ENCODE measurements at regions of chr3 and their contacts with region 1.

Region 1: GRCh38 chr3:132416807-132417694 is at the start of gene DNAJC13:
- DNase-seq: peak; percentile 80 to 93 (median 92)
- ATAC-seq: peak; percentile 97
- H3K4me3 ChIP-seq: peak within 1 kb of the TSS; percentile 94
- H3K4me3 Mint-ChIP-seq: peak within 1 kb of the TSS; percentile 97 to 100 (median 99)
- H3K27ac ChIP-seq: peak within 1 kb of the TSS; percentile 82
- H3K27ac Mint-ChIP-seq: peak within 1 kb of the TSS; percentile 93 to 99 (median 98)
- H3K4me1 ChIP-seq: peaks cover 7 to 11% of the 10 kb centered on the region in 2 donors
- H3K4me1 Mint-ChIP-seq: peaks cover 12 to 40% (median 33%) of the 10 kb centered on the region in 7 donors
- H3K27me3 ChIP-seq: no peaks in the 10 kb centered on the region
- H3K27me3 Mint-ChIP-seq: peaks cover 0 to 4% (median 0%) of the 10 kb centered on the region in 5 donors
- total RNA-seq, gene DNAJC13: 23.6 to 41.5 (median 37.5) TPM

Region 2: GRCh38 chr3:130746246-130747039 is 1670.6 kb before region 1 on chr3 and contains the start of gene PIK3R4:
- CTCF ChIA-PET with region 1: no interaction called
- POLR2A ChIA-PET with region 1: no interaction called
- intact Hi-C with region 1: loop called in 1 of 2 experiments (anchors 2 kb)
- DNase-seq: peak; percentile 79 to 98 (median 92)
- ATAC-seq: peak; percentile 87
- H3K4me3 ChIP-seq: peak within 1 kb of the TSS; percentile 87
- H3K4me3 Mint-ChIP-seq: peak within 1 kb of the TSS in 9 of 10 donors; percentile 82 to 97 (median 93)
- H3K27ac ChIP-seq: peak within 1 kb of the TSS; percentile 89
- H3K27ac Mint-ChIP-seq: peak within 1 kb of the TSS; percentile 89 to 99 (median 94)
- H3K4me1 ChIP-seq: peaks cover 5 to 20% of the 10 kb centered on the region in 2 donors
- H3K4me1 Mint-ChIP-seq: peaks cover 35 to 62% (median 50%) of the 10 kb centered on the region in 7 donors
- H3K27me3 ChIP-seq: no peaks in the 10 kb centered on the region
- H3K27me3 Mint-ChIP-seq: peaks cover 0 to 3% (median 0%) of the 10 kb centered on the region in 5 donors
- total RNA-seq, gene PIK3R4: 15.5 to 33.6 (median 27.3) TPM

Region 3: GRCh38 chr3:131502530-131503245 is 914.4 kb before region 1 on chr3 and contains the start of gene MRPL3:
- CTCF ChIA-PET with region 1: no interaction called
- POLR2A ChIA-PET with region 1: no interaction called
- intact Hi-C with region 1: loop called (anchors 2 to 10 kb)
- DNase-seq: peak; percentile 68 to 82 (median 78)
- ATAC-seq: peak; percentile 90
- H3K4me3 ChIP-seq: peak within 1 kb of the TSS; percentile 79
- H3K4me3 Mint-ChIP-seq: peak within 1 kb of the TSS; percentile 94 to 100 (median 98)
- H3K27ac ChIP-seq: peak within 1 kb of the TSS; percentile 72
- H3K27ac Mint-ChIP-seq: peak within 1 kb of the TSS; percentile 86 to 98 (median 96)
- H3K4me1 ChIP-seq: peaks cover 23% of the 10 kb centered on the region in 2 donors
- H3K4me1 Mint-ChIP-seq: peaks cover 15 to 65% (median 53%) of the 10 kb centered on the region in 7 donors
- H3K27me3 ChIP-seq: no peaks in the 10 kb centered on the region
- H3K27me3 Mint-ChIP-seq: no peaks in the 10 kb centered on the region
- total RNA-seq, gene MRPL3: 33.8 to 79.2 (median 52.7) TPM

Region 4: DNA sequence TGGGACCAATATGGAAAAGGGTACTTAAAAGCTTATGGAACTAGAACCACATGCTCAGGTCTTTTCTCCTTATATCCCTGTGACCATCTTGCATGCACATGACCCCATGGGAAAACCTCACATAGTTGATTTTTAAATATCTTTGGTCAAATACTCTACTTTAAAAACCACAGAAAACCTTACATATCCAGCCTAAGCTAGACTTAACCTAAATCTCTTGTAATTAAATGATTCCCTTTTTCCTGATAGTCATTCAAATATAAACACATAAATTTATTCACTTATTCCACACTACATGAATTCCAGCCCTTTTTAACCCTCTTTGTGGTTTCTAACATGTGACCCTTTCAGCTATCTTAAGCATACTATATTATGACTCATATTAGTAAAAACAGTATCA is 47.0 kb after region 1 on chr3:
- CTCF ChIA-PET with region 1: no interaction called
- POLR2A ChIA-PET with region 1: no interaction called
- intact Hi-C with region 1: no loop called
- DNase-seq: no peak
- ATAC-seq: no peak
- H3K4me3 ChIP-seq: no peak overlapping the region
- H3K4me3 Mint-ChIP-seq: no peak overlapping the region
- H3K27ac ChIP-seq: no peak overlapping the region
- H3K27ac Mint-ChIP-seq: peak overlapping the region in 1 of 9 donors; percentile 33
- H3K4me1 ChIP-seq: no peaks in the 10 kb centered on the region
- H3K4me1 Mint-ChIP-seq: no peaks in the 10 kb centered on the region
- H3K27me3 ChIP-seq: no peaks in the 10 kb centered on the region
- H3K27me3 Mint-ChIP-seq: no peaks in the 10 kb centered on the region

Region 5: GRCh38 chr3:132659365-132660051 is 242.5 kb after region 1 on chr3 and contains the start of gene ACAD11:
- CTCF ChIA-PET with region 1: no interaction called
- POLR2A ChIA-PET with region 1: interaction called, 3 read pairs
- intact Hi-C with region 1: loop called (anchors 1 to 2 kb)
- DNase-seq: peak in 7 of 9 donors; percentile 2 to 55 (median 18)
- ATAC-seq: peak; percentile 54
- H3K4me3 ChIP-seq: peak within 1 kb of the TSS; percentile 99
- H3K4me3 Mint-ChIP-seq: peak within 1 kb of the TSS; percentile 84 to 98 (median 97)
- H3K27ac ChIP-seq: peak within 1 kb of the TSS; percentile 92
- H3K27ac Mint-ChIP-seq: peak within 1 kb of the TSS; percentile 95 to 98 (median 96)
- H3K4me1 ChIP-seq: peaks cover 9 to 19% of the 10 kb centered on the region in 2 donors
- H3K4me1 Mint-ChIP-seq: peaks cover 42 to 78% (median 67%) of the 10 kb centered on the region in 7 donors
- H3K27me3 ChIP-seq: no peaks in the 10 kb centered on the region
- H3K27me3 Mint-ChIP-seq: no peaks in the 10 kb centered on the region
- total RNA-seq, gene ACAD11: 15.0 to 33.7 (median 27.5) TPM

Region 6: GRCh38 chr3:133805527-133806475 is 1388.8 kb after region 1 on chr3 and contains the start of gene SRPRB:
- CTCF ChIA-PET with region 1: no interaction called
- POLR2A ChIA-PET with region 1: no interaction called
- intact Hi-C with region 1: loop called (anchors 1 to 5 kb)
- DNase-seq: peak; percentile 91 to 96 (median 94)
- ATAC-seq: peak; percentile 98
- H3K4me3 ChIP-seq: peak within 1 kb of the TSS; percentile 76
- H3K4me3 Mint-ChIP-seq: peak within 1 kb of the TSS; percentile 90 to 99 (median 98)
- H3K27ac ChIP-seq: peak within 1 kb of the TSS; percentile 81
- H3K27ac Mint-ChIP-seq: peak within 1 kb of the TSS; percentile 70 to 98 (median 95)
- H3K4me1 ChIP-seq: peaks cover 7 to 8% of the 10 kb centered on the region in 2 donors
- H3K4me1 Mint-ChIP-seq: peaks cover 16 to 50% (median 34%) of the 10 kb centered on the region in 7 donors
- H3K27me3 ChIP-seq: no peaks in the 10 kb centered on the region
- H3K27me3 Mint-ChIP-seq: peaks cover 0 to 7% (median 5%) of the 10 kb centered on the region in 5 donors
- total RNA-seq, gene SRPRB: 27.4 to 63.3 (median 34.6) TPM

Measured in naive thymus-derived CD4-positive, alpha-beta T cell (primary cell).